Ascending aorta (tissue), 2 donors: ENCODE measurements at regions of chr2 and their contacts with region 1.

Region 1: GRCh38 chr2:229159405-229159804 is 111.7 kb downstream of the PID1 start:
- DNase-seq: no peak
- H3K4me3 ChIP-seq: peak overlapping the region in 1 of 2 donors; percentile 47
- H3K27ac ChIP-seq: peak overlapping the region; percentile 75 to 91
- H3K4me1 ChIP-seq: peaks cover 13 to 41% of the 10 kb centered on the region in 2 donors
- H3K27me3 ChIP-seq: no peaks in the 10 kb centered on the region
- CTCF ChIP-seq: no peak

Region 2: DNA sequence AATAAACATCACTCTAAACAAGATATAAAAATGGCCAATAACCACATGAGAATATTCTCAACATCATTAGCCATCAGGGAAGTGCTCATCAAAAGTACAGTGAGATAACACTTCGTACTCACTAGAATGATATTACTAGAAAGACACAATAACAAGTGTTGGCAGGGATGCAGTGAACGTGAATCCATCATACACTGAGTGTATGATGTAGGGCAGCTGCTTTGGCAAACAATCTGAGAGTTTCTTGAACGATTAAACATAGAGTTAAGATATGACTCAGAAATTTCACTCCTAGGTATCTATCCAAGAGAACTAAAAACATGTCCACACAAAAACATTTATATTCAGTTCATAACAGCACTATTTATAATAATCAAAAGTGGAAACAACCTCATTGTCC is 257.2 kb before region 1 on chr2:
- intact Hi-C with region 1: no loop called
- DNase-seq: no peak
- H3K4me3 ChIP-seq: no peak overlapping the region
- H3K27ac ChIP-seq: no peak overlapping the region
- H3K4me1 ChIP-seq: no peaks in the 10 kb centered on the region
- H3K27me3 ChIP-seq: no peaks in the 10 kb centered on the region
- CTCF ChIP-seq: no peak

Region 3: GRCh38 chr2:229174794-229175496 is 15.5 kb after region 1 on chr2:
- intact Hi-C with region 1: loop called (anchors 1 kb)
- DNase-seq: no peak
- H3K4me3 ChIP-seq: no peak overlapping the region
- H3K27ac ChIP-seq: peak overlapping the region; percentile 28 to 71
- H3K4me1 ChIP-seq: peaks cover 3 to 26% of the 10 kb centered on the region in 2 donors
- H3K27me3 ChIP-seq: no peaks in the 10 kb centered on the region
- CTCF ChIP-seq: no peak